Activated CD4-positive, alpha-beta T cell treated with anti-CD3 and anti-CD28 coated beads, Interleukin-2, amount 10 ng/mL, durations not matched to agents 24 days and 14 days (primary cell): ENCODE measurements at regions of chr5 and their contacts with region 1.

Region 1: DNA sequence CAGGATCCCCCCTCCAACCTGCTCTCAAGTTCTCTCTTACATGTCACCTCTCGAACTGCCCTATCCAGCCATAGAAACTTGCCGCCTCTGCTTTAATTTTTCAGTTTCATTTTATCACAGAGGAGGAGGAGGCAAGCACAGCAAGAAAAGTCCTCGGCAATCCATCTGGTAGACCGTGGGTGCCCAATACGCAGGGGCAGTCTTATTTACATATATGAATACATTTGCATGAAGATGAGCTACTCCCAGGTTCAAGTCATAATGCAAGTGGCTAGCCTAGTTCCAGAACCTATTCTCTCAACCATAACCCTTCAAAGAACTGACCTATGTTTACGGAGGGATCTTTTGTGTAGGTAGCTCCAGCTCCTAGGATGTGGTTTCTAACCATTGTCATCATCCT is 223.2 kb upstream of the PANK3 start:
- DNase-seq: peak; percentile 62
- H3K4me3 Mint-ChIP-seq: peak overlapping the region; percentile 66
- H3K27ac Mint-ChIP-seq: peak overlapping the region; percentile 94
- H3K4me1 Mint-ChIP-seq: peaks cover 25% of the 10 kb centered on the region
- H3K27me3 Mint-ChIP-seq: no peaks in the 10 kb centered on the region

Region 2: GRCh38 chr5:168822745-168823281 is 20.5 kb after region 1 on chr5:
- intact Hi-C with region 1: loop called (anchors 1 kb)
- DNase-seq: no peak
- H3K4me3 Mint-ChIP-seq: peak overlapping the region; percentile 21
- H3K27ac Mint-ChIP-seq: peak overlapping the region; percentile 92
- H3K4me1 Mint-ChIP-seq: peaks cover 12% of the 10 kb centered on the region
- H3K27me3 Mint-ChIP-seq: peaks cover 4% of the 10 kb centered on the region

Region 3: DNA sequence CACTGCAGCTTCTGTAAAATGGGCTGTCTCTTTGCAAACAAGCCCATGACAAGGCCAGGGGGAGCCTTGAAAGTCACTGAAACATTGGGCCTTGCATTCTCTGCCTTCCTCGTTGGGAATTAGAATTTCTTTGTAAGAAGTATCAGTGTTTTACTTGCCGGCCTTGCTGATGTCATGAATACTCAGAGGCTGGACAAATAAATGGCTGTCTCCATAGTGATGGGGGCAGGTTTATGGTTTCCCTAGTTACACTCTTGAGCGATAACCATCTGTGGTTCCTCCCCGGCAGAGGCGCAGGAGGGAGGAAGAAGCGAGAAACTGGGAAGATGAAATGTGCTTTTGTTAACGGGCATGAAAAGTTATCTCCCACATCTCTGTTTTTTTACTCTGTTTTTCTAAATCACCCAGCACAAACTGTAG is 49.6 kb after region 1 on chr5:
- intact Hi-C with region 1: loop called (anchors 1 kb)
- DNase-seq: peak; percentile 82
- H3K4me3 Mint-ChIP-seq: peak overlapping the region; percentile 64
- H3K27ac Mint-ChIP-seq: peak overlapping the region; percentile 84
- H3K4me1 Mint-ChIP-seq: peaks cover 19% of the 10 kb centered on the region
- H3K27me3 Mint-ChIP-seq: peaks cover 20% of the 10 kb centered on the region